HAP-1 (cell line): ENCODE measurements at regions of chr11 and their contacts with region 1.

Region 1: GRCh38 chr11:17063171-17064002 is 14.1 kb downstream of the RPS13 start:
- DNase-seq: peak; percentile 64 to 84
- H3K4me3 ChIP-seq: no peak overlapping the region
- H3K4me1 ChIP-seq: no peaks in the 10 kb centered on the region
- H3K27me3 ChIP-seq: no peaks in the 10 kb centered on the region

Region 2: DNA sequence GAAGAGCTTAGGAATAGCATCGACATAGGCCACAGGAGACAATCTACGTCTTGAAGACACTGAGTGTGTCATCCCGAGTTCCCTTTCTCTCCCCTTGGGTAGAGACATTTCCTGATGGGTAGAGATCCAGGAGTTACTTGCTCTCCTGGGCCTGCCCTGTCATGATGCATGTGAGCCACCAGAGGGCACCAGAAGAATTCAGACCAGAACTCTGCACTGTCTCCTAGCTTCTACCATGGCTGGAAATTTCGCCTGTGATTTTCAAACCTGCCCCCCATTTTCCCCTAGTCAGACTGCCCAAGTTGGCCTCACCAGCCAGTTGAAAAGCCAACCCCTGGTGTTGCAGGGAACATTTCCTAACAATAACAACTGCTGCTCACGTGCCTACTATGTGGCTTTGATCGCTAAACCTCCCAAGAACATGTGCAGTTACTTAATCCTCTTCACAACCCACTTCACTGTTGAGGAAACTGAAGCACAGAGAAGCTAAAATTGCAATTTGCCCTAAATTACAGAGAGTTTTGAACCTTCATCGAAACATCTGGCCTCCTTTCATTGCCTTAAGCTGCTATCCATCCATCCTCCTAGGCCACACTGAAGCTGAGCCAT is 277.8 kb before region 1 on chr11:
- in situ Hi-C with region 1: loop called (anchors 10 kb)
- DNase-seq: peak; percentile 55 to 80
- H3K4me3 ChIP-seq: no peak overlapping the region
- H3K4me1 ChIP-seq: peaks cover 20% of the 10 kb centered on the region
- H3K27me3 ChIP-seq: no peaks in the 10 kb centered on the region

Region 3: DNA sequence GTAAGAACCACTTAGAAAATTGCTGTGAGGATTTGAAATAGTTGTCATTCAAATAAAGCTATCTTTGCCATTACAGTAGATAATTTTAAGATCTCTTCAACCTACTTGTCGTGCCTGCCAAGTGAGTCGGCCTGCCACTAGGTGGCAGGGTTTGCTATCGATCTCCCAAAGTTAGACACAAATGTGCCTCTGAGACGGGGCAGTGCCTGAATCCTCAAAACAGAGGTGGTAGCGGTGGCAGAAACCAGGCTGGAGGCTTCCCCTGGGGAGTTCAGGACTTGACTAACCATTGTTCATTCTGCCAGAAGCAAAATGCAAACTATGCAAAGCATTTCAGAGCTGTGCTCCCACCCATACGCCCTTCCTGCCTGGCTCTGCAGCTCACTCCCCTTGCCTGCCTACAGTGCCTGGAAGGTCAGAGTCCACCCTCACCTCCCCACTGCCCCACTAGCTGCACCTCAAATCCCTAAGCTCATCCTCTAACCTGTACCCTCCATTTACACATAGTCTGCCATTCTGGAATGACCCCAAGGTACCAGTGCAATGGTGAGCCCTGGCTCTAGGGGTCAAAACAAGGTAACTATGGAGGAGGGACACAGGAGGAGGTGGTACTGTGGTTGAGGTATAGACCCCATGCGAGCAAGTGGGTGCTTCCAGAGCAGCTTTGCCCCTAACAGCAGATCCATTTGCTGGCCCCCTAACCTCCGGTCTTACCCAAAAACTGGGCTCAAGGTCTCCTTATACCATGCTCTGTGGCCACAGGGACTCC is 242.9 kb before region 1 on chr11:
- in situ Hi-C with region 1: loop called (anchors 10 kb)
- DNase-seq: peak; percentile 88 to 90
- H3K4me3 ChIP-seq: no peak overlapping the region
- H3K4me1 ChIP-seq: peaks cover 7% of the 10 kb centered on the region
- H3K27me3 ChIP-seq: no peaks in the 10 kb centered on the region